Naive thymus-derived CD4-positive, alpha-beta T cell (primary cell): ENCODE measurements at regions of chr20 and their contacts with region 1.

Region 1: DNA sequence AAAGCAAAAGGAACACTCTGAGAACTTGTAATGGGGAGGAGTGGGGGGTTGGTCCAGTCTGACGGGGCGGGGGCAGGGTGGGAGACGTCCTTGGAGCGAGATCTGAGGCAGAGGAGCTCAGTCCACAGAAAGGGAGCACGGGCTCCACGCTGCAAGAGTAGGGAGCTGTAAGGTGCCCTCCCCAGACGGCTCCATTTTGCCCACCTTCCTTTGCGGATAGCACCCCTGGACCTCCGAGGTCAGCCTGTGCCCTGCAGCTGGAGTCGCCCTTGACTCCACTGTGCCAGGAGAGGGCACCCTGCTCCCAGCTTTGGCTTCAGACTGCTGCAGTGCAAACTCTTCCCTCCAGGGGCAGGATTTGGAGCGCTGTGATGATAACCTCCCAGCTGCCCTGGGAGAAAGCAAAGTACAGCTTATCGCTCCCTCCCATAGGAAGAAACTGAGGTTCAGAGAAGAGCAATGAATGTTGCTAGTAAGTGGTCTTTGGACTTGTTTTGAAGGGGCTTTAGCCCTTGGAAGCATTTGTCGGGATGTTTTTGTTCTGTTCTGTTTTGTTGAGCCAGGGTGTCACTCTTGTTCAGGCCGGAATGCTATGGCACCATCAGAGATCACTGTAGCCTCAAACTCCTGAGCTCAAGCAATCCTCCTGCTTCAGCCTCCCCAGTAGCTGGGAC is 9.5 kb upstream of the AHCY start:
- DNase-seq: peak; percentile 71 to 85 (median 82)
- ATAC-seq: peak; percentile 100
- H3K4me3 ChIP-seq: no peak overlapping the region
- H3K4me3 Mint-ChIP-seq: peak overlapping the region in 9 of 10 donors; percentile 20 to 58 (median 38)
- H3K27ac ChIP-seq: no peak overlapping the region
- H3K27ac Mint-ChIP-seq: peak overlapping the region in 1 of 9 donors; percentile 75
- H3K4me1 ChIP-seq: peaks cover 0 to 6% of the 10 kb centered on the region in 2 donors
- H3K4me1 Mint-ChIP-seq: peaks cover 0 to 14% (median 5%) of the 10 kb centered on the region in 7 donors
- H3K27me3 ChIP-seq: peaks cover 0 to 10% of the 10 kb centered on the region in 2 donors
- H3K27me3 Mint-ChIP-seq: peaks cover 0 to 27% (median 9%) of the 10 kb centered on the region in 5 donors

Region 2: DNA sequence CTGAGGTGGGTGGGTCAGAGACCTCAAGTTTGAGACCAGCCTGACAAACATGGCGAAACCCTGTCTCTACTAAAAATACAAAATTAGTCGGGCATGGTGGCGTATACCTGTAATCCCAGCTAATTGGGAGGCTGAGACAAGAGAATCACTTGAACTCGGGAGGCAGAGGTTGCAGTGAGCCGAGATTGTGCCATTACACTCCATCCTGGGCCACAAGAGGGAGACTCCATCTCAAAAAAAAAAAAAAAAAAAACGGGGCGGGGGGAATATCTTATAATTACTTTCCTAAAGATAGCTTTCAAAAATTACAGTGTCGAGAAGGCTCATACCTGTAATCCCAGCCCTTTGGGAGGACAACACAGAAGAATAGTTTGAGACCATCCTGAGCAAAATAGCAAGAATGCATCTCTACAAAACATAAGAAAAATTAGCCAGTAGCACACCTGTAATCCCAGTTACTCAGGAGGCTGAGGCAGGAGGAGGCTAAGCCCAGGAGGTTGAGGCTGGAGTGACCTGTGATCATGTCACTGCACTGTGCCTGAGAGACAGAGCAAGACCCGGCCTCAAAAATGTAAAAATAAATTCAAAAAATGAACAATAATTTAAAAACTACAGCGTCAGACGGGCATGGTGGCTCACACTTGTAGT is 797.0 kb before region 1 on chr20:
- CTCF ChIA-PET with region 1: no interaction called
- POLR2A ChIA-PET with region 1: no interaction called
- intact Hi-C with region 1: no loop called
- DNase-seq: peak in 1 of 9 donors; percentile 5
- ATAC-seq: no peak
- H3K4me3 ChIP-seq: no peak overlapping the region
- H3K4me3 Mint-ChIP-seq: no peak overlapping the region
- H3K27ac ChIP-seq: no peak overlapping the region
- H3K27ac Mint-ChIP-seq: no peak overlapping the region
- H3K4me1 ChIP-seq: no peaks in the 10 kb centered on the region
- H3K4me1 Mint-ChIP-seq: peaks cover 6 to 33% (median 24%) of the 10 kb centered on the region in 7 donors
- H3K27me3 ChIP-seq: no peaks in the 10 kb centered on the region
- H3K27me3 Mint-ChIP-seq: no peaks in the 10 kb centered on the region

Region 3: GRCh38 chr20:34403908-34404307 is 91.2 kb after region 1 on chr20:
- CTCF ChIA-PET with region 1: interaction called, 14 read pairs
- POLR2A ChIA-PET with region 1: no interaction called
- intact Hi-C with region 1: no loop called
- DNase-seq: no peak
- ATAC-seq: no peak
- H3K4me3 ChIP-seq: no peak overlapping the region
- H3K4me3 Mint-ChIP-seq: peak overlapping the region in 6 of 10 donors; percentile 1 to 42 (median 28)
- H3K27ac ChIP-seq: no peak overlapping the region
- H3K27ac Mint-ChIP-seq: peak overlapping the region; percentile 2 to 82 (median 29)
- H3K4me1 ChIP-seq: peaks cover 18 to 28% of the 10 kb centered on the region in 2 donors
- H3K4me1 Mint-ChIP-seq: peaks cover 23 to 77% (median 64%) of the 10 kb centered on the region in 7 donors
- H3K27me3 ChIP-seq: no peaks in the 10 kb centered on the region
- H3K27me3 Mint-ChIP-seq: no peaks in the 10 kb centered on the region

Region 4: DNA sequence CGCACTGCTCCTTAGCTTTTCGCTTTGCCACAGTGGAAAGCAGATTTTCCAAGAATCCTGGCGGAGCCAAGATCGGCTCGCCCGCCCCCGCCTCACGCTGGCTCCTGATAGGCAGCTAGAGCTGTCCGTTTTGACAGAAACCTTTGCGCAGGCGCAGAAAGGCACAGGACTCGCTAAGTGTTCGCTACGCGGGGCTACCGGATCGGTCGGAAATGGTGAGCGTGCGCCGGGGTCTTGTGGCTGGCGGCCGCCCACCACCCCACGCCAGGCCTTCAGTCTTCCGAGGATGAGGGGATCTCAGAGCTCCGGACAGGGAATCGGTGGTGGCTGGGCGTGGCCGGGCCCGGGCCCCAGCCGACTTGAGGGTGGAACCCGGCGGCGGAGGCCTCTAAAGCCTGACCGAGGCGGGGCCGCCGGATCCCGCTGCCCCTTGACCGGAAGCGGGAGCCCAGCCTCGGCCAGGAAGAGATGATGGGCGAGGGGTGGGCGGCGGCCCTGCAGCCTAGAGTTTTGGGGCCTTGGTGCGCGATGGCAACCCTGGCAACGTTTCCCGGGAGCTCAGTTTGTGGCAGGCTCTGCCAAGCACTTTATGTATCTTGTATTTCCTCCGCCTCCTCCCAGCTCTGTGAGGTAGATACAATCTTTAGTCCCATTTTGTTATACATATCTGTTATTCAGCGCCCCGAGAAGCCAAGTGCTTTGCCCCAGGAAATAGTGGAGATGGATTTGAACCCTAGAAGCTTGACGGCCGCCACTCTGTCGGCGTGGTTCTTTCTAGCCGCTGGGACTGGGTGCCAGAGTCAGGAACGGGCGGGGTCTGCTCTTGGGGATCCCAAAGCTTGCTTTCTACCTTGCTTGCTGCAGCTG is 203.8 kb after region 1 on chr20 and contains the start of gene DYNLRB1:
- CTCF ChIA-PET with region 1: interaction called, 13 read pairs
- POLR2A ChIA-PET with region 1: interaction called, 3 read pairs
- intact Hi-C with region 1: no loop called
- DNase-seq: peak; percentile 87 to 94 (median 92)
- ATAC-seq: peak; percentile 88
- H3K4me3 ChIP-seq: peak within 1 kb of the TSS; percentile 96
- H3K4me3 Mint-ChIP-seq: peak within 1 kb of the TSS; percentile 97 to 100 (median 99)
- H3K27ac ChIP-seq: peak within 1 kb of the TSS; percentile 86
- H3K27ac Mint-ChIP-seq: peak within 1 kb of the TSS; percentile 94 to 99 (median 97)
- H3K4me1 ChIP-seq: peaks cover 8 to 11% of the 10 kb centered on the region in 2 donors
- H3K4me1 Mint-ChIP-seq: peaks cover 12 to 59% (median 51%) of the 10 kb centered on the region in 7 donors
- H3K27me3 ChIP-seq: no peaks in the 10 kb centered on the region
- H3K27me3 Mint-ChIP-seq: no peaks in the 10 kb centered on the region
- total RNA-seq, gene DYNLRB1: 45.9 to 91.9 (median 60.7) TPM

Region 5: DNA sequence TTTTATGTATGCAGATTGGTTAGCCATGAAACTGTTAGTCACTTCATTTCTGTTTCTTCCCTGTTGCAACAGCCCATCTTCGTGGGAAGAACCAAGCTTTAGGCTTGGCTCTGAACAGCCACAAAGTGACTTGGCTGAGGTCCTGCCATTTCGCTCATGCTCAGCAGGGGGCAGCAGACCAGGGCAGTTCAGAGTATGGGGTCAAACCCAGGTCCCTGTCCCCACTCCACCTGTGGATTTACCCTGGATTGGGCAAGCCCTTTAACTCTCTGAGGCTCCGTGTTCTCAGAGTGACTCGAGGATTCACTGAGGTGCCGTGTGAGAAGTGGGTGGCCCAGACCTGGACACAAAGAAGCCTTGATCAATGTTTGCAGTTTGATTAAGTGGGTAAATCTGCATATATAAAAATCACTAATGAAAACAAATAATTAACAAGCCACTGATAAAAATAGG is 226.0 kb after region 1 on chr20:
- CTCF ChIA-PET with region 1: interaction called, 6 read pairs
- POLR2A ChIA-PET with region 1: no interaction called
- intact Hi-C with region 1: loop called in 1 of 2 experiments (anchors 5 kb)
- DNase-seq: peak in 6 of 9 donors; percentile 23 to 62 (median 34)
- ATAC-seq: peak; percentile 74
- H3K4me3 ChIP-seq: no peak overlapping the region
- H3K4me3 Mint-ChIP-seq: no peak overlapping the region
- H3K27ac ChIP-seq: no peak overlapping the region
- H3K27ac Mint-ChIP-seq: peak overlapping the region in 2 of 9 donors; percentile 33 to 59
- H3K4me1 ChIP-seq: peaks cover 0 to 21% of the 10 kb centered on the region in 2 donors
- H3K4me1 Mint-ChIP-seq: peaks cover 0 to 24% (median 11%) of the 10 kb centered on the region in 7 donors
- H3K27me3 ChIP-seq: no peaks in the 10 kb centered on the region
- H3K27me3 Mint-ChIP-seq: no peaks in the 10 kb centered on the region

Region 6: DNA sequence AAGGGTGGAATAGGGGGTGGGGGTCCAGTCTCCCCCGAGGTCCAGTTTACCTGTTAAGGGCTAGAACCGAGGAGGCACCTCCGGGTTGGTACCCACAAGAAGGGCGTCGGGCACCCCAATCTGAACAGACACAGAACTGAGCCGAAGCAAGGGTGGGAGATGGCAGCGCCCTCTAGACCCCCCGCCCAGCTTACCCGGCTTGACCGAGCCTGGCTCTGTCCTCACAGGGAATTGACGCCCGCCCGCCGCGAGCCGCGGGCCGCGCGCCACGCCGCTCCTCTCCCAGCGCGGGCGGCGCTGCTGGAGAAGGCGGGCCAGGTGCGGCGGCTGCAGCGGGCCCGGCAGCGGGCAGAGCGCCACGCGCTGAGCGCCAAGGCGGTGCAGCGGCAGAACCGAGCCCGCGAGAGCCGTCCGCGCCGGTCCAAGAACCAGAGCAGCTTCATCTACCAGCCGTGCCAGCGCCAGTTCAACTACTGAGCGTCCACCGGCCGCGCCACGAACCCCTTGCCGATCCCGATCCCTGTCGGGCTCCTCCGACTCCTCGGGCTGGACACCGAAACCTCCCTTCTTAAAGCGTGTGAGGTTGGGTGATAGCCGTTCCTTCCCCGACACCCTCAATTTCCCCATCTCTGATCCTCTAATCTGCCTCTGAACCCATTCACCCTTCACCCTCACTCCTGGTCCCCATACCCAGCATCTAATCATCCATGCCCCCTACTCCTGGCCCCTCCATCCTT is 397.3 kb after region 1 on chr20:
- CTCF ChIA-PET with region 1: interaction called, 17 read pairs
- POLR2A ChIA-PET with region 1: no interaction called
- intact Hi-C with region 1: loop called (anchors 1 to 2 kb)
- DNase-seq: peak in 1 of 9 donors; percentile 65
- ATAC-seq: peak; percentile 58
- H3K4me3 ChIP-seq: peak overlapping the region; percentile 75
- H3K4me3 Mint-ChIP-seq: peak overlapping the region; percentile 80 to 95 (median 89)
- H3K27ac ChIP-seq: peak overlapping the region; percentile 87
- H3K27ac Mint-ChIP-seq: peak overlapping the region; percentile 16 to 96 (median 87)
- H3K4me1 ChIP-seq: peaks cover 3 to 7% of the 10 kb centered on the region in 2 donors
- H3K4me1 Mint-ChIP-seq: peaks cover 11 to 38% (median 16%) of the 10 kb centered on the region in 7 donors
- H3K27me3 ChIP-seq: no peaks in the 10 kb centered on the region
- H3K27me3 Mint-ChIP-seq: peaks cover 0 to 9% (median 0%) of the 10 kb centered on the region in 5 donors

Region 7: GRCh38 chr20:34955232-34956040 is 642.8 kb after region 1 on chr20 and contains the starts of genes GSS and MYH7B:
- CTCF ChIA-PET with region 1: no interaction called
- POLR2A ChIA-PET with region 1: no interaction called
- intact Hi-C with region 1: loop called in 1 of 2 experiments (anchors 1 kb)
- DNase-seq: peak; percentile 90 to 100 (median 94)
- ATAC-seq: peak; percentile 97
- H3K4me3 ChIP-seq: peak within 1 kb of the TSS; percentile 87
- H3K4me3 Mint-ChIP-seq: peak within 1 kb of the TSS; percentile 95 to 100 (median 98)
- H3K27ac ChIP-seq: peak within 1 kb of the TSS; percentile 77
- H3K27ac Mint-ChIP-seq: peak within 1 kb of the TSS; percentile 94 to 98 (median 97)
- H3K4me1 ChIP-seq: peaks cover 5 to 11% of the 10 kb centered on the region in 2 donors
- H3K4me1 Mint-ChIP-seq: peaks cover 11 to 40% (median 34%) of the 10 kb centered on the region in 7 donors
- H3K27me3 ChIP-seq: no peaks in the 10 kb centered on the region
- H3K27me3 Mint-ChIP-seq: no peaks in the 10 kb centered on the region
- total RNA-seq, gene GSS: 25.9 to 54.4 (median 45.8) TPM
- total RNA-seq, gene MYH7B: 0.15 to 1.0 (median 0.44) TPM